ENCODE measurements at regions of chr3 and their contacts with region 1.

Region 1: GRCh38 chr3:138284957-138285477 is 44.6 kb downstream of the NME9 start:
- DNase-seq: no peak
- H3K4me3 ChIP-seq: no peak overlapping the region
- H3K27ac ChIP-seq: no peak overlapping the region
- H3K4me1 ChIP-seq: peaks cover 19% of the 10 kb centered on the region
- H3K27me3 ChIP-seq: no peaks in the 10 kb centered on the region
- CTCF ChIP-seq: peak in 1 of 2 donors; percentile 47

Region 2: DNA sequence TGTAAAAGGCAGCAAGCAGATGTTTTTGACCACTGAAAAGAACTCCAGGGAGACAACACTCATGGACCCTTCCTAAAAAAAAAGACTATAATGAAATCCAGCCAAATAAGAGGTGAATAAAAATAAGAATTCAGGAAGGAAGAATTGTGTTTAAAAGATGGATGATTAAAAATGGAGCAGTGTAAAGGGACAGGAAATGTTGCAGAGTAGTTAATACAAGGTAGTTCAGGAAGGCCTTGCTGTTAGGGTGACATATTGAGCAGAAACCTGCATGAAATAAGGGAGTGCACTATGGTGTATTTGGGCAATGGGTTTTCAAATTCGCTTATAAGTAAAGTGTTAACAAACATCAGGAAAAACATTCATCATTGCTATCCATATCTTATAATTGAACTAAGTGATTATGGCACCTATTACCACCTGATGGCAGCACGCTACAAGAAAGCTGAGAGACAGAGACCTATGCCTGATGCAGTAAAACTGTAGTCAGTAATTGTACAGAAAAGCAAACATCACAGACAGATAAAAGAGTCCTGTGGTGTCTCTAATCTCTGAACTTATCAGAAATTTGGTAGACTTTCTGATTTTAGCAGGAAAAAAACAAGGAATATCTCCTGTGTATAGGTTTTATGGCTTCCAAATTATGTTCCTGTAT is 104.5 kb before region 1 on chr3:
- CTCF ChIA-PET with region 1: interaction called, 4 read pairs
- dilution Hi-C with region 1: no loop called
- in situ Hi-C with region 1: no loop called
- intact Hi-C with region 1: loop called (anchors 1 kb)
- DNase-seq: peak; percentile 37
- H3K4me3 ChIP-seq: no peak overlapping the region
- H3K27ac ChIP-seq: no peak overlapping the region
- H3K4me1 ChIP-seq: peaks cover 7% of the 10 kb centered on the region
- H3K27me3 ChIP-seq: no peaks in the 10 kb centered on the region
- CTCF ChIP-seq: peak; percentile 46 to 71

Region 3: GRCh38 chr3:138186803-138187295 is 98.2 kb before region 1 on chr3:
- CTCF ChIA-PET with region 1: interaction called, 20 read pairs
- dilution Hi-C with region 1: no loop called
- in situ Hi-C with region 1: no loop called
- intact Hi-C with region 1: no loop called
- DNase-seq: peak; percentile 84
- H3K4me3 ChIP-seq: peak overlapping the region; percentile 74 to 93 (median 78)
- H3K27ac ChIP-seq: peak overlapping the region; percentile 80
- H3K4me1 ChIP-seq: peaks cover 12% of the 10 kb centered on the region
- H3K27me3 ChIP-seq: no peaks in the 10 kb centered on the region
- CTCF ChIP-seq: no peak

Region 4: GRCh38 chr3:138254216-138254615 is 30.8 kb before region 1 on chr3:
- CTCF ChIA-PET with region 1: no interaction called
- dilution Hi-C with region 1: no loop called
- in situ Hi-C with region 1: no loop called
- intact Hi-C with region 1: loop called (anchors 1 kb)
- DNase-seq: peak; percentile 70
- H3K4me3 ChIP-seq: no peak overlapping the region
- H3K27ac ChIP-seq: peak overlapping the region; percentile 50
- H3K4me1 ChIP-seq: peaks cover 9% of the 10 kb centered on the region
- H3K27me3 ChIP-seq: no peaks in the 10 kb centered on the region
- CTCF ChIP-seq: no peak